AG04449 (cell line): ENCODE measurements at regions of chr9 and their contacts with region 1.

Region 1: GRCh38 chr9:111621895-111622480 is 9.1 kb upstream of the DNAJC25 start:
- DNase-seq: no peak
- H3K4me3 ChIP-seq: no peak overlapping the region
- CTCF ChIP-seq: peak; percentile 66

Region 2: GRCh38 chr9:111597817-111598729 is 23.9 kb before region 1 on chr9:
- CTCF ChIA-PET with region 1: interaction called, 15 read pairs
- POLR2A ChIA-PET with region 1: no interaction called
- DNase-seq: no peak
- H3K4me3 ChIP-seq: peak overlapping the region; percentile 72
- CTCF ChIP-seq: peak; percentile 59